Activated CD8-positive, alpha-beta T cell treated with anti-CD3 and anti-CD28 coated beads for 36 hours (primary cell): ENCODE measurements at regions of chr22 and their contacts with region 1.

Region 1: DNA sequence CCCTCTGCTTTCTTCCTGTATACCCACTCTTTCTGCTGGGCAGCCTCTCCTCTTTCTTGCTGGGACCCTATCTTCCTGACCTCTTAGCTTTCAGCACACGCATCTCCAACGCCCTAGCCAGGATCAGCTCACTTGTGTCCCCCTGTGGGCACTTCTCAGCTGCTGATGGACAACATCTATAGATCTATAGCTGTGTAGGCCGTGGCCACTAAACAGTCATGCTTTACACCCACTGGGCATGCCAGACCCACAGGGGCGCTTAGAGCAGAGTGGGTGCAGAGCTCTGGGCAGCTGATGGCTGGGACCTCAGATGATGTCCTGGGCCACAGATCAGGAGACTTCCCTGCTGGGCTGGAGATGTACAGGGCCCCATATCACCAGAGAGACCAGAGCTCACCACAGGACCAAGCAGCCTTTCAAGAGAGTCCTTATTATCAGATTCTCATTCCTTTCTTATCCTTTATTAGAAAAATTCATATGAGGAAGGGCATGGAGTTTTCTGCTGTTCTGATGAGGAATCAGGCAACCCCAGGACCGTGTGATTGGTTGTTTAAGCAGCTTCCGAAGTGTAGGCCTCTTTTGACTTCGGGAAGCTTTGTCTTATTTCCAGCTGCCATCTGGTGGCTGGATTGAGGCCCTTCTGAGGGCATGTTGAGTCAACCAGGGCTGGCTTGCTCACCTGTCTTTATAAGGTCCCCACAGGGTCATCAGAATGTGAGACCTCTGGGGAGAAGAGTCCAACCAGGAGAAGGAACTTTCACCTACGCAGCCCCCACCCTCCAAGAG is 60.5 kb downstream of the OSBP2 start:
- DNase-seq: peak; percentile 75
- ATAC-seq: peak; percentile 93
- H3K4me3 Mint-ChIP-seq: no peak overlapping the region
- H3K27ac Mint-ChIP-seq: no peak overlapping the region
- H3K4me1 Mint-ChIP-seq: no peaks in the 10 kb centered on the region
- H3K27me3 Mint-ChIP-seq: no peaks in the 10 kb centered on the region
- CTCF ChIP-seq: peak; percentile 69

Region 2: DNA sequence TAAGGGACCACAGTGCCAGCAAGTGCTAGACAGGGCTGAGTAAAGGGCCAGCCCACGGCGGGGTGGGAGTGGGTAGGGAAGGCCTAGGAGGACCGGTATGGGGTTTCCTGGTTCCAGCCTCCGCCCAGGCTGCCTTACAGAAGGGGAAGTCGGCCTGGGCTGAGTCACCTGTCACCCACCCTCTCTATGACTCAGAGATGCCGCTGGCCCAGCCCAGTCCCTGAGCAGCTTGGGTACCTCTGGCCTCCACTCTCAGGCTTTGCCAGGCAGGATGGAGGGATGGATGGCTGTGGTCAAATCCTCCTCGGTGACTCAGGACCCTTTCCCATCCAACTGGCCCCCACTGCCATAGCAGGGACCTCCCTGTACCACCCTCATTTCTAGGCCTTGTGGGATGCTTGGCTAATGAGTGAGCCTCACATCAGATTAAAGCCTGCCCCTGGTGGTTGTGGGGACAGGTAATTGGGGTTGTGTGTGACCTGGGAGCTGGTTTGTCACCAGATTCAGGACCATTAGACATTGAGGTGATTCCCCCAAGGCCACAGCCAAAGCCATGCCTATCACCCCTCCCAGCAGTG is 105.6 kb before region 1 on chr22:
- CTCF ChIA-PET with region 1: interaction called, 10 read pairs
- POLR2A ChIA-PET with region 1: no interaction called
- intact Hi-C with region 1: no loop called
- DNase-seq: peak; percentile 94
- ATAC-seq: peak; percentile 99
- H3K4me3 Mint-ChIP-seq: no peak overlapping the region
- H3K27ac Mint-ChIP-seq: peak overlapping the region; percentile 85
- H3K4me1 Mint-ChIP-seq: peaks cover 28% of the 10 kb centered on the region
- H3K27me3 Mint-ChIP-seq: no peaks in the 10 kb centered on the region
- CTCF ChIP-seq: peak; percentile 59

Region 3: GRCh38 chr22:30742291-30743256 is 12.6 kb before region 1 on chr22:
- CTCF ChIA-PET with region 1: interaction called, 13 read pairs
- POLR2A ChIA-PET with region 1: no interaction called
- intact Hi-C with region 1: no loop called
- DNase-seq: peak; percentile 47
- ATAC-seq: peak; percentile 43
- H3K4me3 Mint-ChIP-seq: no peak overlapping the region
- H3K27ac Mint-ChIP-seq: peak overlapping the region; percentile 86
- H3K4me1 Mint-ChIP-seq: peaks cover 43% of the 10 kb centered on the region
- H3K27me3 Mint-ChIP-seq: peaks cover 4% of the 10 kb centered on the region
- CTCF ChIP-seq: no peak